A673 (cell line): ENCODE measurements at regions of chr4 and their contacts with region 1.

Region 1: DNA sequence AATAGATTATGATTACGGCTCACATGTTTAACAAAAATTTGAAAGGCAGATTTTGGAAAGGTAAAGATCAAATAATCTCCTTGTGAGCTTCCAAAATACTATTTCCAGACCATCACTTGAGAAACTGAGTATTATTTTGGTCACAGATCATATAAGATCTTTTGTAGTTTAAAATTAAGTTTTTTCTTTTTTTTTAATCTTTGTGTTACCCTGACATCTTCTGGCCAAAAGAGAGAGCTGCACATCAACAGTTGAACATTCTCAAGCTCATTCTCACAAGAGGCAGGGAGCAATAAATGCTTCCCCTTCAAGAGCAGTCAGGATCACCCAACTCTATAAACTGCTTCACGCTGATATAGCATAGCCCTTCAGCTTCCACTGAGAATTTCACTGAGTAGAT is 15.9 kb downstream of the TMEM192 start:
- DNase-seq: peak; percentile 52
- H3K4me3 ChIP-seq: no peak overlapping the region
- H3K27ac ChIP-seq: no peak overlapping the region
- H3K4me1 ChIP-seq: no peaks in the 10 kb centered on the region
- H3K27me3 ChIP-seq: no peaks in the 10 kb centered on the region
- CTCF ChIP-seq: peak; percentile 71

Region 2: GRCh38 chr4:164768516-164768915 is 328.3 kb before region 1 on chr4:
- CTCF ChIA-PET with region 1: interaction called, 8 read pairs
- POLR2A ChIA-PET with region 1: no interaction called
- intact Hi-C with region 1: loop called (anchors 5 kb)
- DNase-seq: peak; percentile 60
- H3K4me3 ChIP-seq: no peak overlapping the region
- H3K27ac ChIP-seq: no peak overlapping the region
- H3K4me1 ChIP-seq: peaks cover 18% of the 10 kb centered on the region
- H3K27me3 ChIP-seq: no peaks in the 10 kb centered on the region
- CTCF ChIP-seq: peak; percentile 65

Region 3: DNA sequence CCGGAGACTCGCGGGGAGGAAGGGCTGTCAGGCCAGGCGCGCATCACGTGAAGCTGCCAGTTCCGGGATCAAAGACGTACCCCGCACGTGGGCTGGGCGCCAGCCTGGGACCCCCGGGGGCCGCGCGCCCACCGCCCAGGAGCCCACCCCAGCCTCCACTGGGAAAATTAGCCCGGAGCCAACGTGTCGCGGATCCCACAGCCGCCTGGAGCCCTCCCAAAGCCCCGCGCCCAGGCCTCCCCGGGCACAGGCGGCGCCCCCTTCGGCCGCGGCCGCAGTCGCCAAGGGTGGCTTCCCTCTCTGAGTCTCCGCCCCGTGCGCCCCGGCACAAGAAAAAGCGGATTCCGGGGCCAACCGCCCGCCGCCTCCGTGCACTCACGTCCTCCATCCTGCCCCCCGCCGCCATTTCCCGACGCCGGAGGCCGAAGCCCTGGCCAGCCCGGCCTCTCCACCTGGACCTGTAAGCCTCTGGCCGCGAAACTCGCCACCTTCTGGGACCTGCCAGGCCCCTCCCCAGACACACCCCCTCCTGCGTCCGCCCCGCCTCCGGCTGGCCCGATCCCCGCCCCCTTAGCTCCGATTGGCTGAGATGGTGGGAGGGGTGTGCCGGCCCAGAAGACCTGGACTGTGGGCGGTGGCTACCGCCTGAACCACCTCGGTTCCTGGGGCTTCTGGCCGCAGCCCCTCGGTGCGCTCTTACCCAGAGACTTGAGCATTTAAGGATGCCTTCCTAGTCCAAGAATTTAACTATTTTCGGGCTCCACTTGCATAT is 15.8 kb after region 1 on chr4 and contains the start of gene TMEM192:
- CTCF ChIA-PET with region 1: interaction called, 10 read pairs
- POLR2A ChIA-PET with region 1: no interaction called
- intact Hi-C with region 1: no loop called
- DNase-seq: peak; percentile 93
- H3K4me3 ChIP-seq: peak within 1 kb of the TSS; percentile 92
- H3K27ac ChIP-seq: peak within 1 kb of the TSS; percentile 80
- H3K4me1 ChIP-seq: peaks cover 10% of the 10 kb centered on the region
- H3K27me3 ChIP-seq: no peaks in the 10 kb centered on the region
- CTCF ChIP-seq: 0 out of 2 replicates have a peak, but pooled peaks have one; percentile 11
- total RNA-seq, gene TMEM192: 9.9 and 13.6 TPM in 2 replicates